H1 (cell line): ENCODE measurements at regions of chr6 and their contacts with region 1.

Region 1: DNA sequence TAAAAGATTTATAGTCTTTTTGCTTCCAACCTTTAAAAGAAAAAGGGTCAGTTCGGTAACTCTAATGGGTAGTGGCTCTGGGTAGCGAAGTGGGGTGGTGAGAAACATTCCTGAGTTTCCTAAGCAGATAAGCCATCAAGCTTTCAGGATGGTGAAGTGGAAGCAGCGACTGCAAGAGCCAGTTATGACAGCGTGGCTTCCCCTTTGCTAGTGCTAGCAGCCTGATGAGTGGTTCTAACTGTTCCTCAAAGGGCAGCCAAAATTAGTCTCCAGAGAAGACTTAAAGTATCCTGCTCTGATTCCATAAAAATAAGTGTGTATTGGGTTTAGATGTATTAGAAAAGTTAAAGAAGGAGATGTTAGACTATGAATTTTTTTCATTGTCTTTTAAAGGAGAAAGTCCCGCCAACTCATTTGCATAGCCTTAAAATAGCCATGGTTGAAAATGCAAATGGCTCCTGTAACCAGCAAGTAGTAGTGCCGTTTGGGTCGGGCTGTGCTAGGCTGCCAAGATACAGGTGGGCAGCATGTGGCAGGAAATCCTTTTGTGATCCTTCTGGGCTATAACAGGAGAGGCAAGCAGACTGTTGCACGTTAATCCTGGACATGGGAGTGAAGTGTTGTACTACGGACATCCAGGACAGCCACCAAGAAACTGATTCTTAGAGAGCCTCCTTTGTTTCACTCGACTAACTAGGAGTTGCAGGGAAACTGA is 18.0 kb downstream of the ELOVL2 start:
- DNase-seq: peak in 1 of 2 experiments; percentile 58
- H3K4me3 ChIP-seq: peak overlapping the region in 2 of 4 experiments; percentile 5 to 48; a peak in 3 of 8 replicates
- H3K27ac ChIP-seq: peak overlapping the region; percentile 19; the same call in 1 of the 2 replicates
- H3K4me1 ChIP-seq: peaks cover 0 to 8% (median 3%) of the 10 kb centered on the region in 4 experiments; a peak in 5 of 7 replicates
- H3K27me3 ChIP-seq: no peaks in the 10 kb centered on the region
- CTCF ChIP-seq: no peak
- EP300 ChIP-seq: no peak
- POLR2A ChIP-seq: peak; percentile 31 to 77
- RAD21 ChIP-seq: no peak

Region 2: DNA sequence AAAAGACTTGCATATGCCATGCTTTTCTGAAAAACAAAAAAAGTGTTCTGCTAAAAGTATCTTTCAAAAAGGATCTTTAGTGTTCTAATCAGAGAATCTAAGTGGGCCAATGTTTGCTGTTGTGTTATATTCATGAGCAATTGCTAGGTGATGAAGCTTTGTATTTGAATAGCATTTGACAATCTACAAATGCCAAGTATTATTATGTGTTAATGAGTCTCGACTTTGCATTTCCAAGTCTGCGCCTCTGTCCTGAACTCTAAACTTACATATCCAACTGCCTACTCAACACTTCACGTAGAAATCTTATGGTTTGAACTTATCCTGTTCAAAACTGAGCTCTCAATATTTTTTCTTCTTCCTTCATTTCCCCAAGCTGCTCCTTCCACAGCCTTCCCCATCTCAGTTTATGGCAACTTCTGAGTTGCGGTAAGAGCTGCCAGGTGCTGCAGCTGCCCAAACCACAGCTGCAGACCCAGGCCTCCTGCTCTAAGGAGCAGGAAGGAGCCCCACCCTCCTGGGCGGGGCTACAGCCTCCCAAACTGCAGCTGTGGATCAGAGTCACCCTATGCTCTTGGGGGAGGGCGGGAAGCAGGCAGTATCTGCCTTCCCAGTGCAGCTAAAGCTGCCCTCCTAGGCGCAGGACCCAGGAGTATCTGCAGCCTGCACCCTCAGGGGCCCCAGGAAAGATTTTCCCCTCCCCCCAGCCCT is 171.0 kb before region 1 on chr6:
- CTCF ChIA-PET with region 1: no interaction called
- POLR2A ChIA-PET with region 1: no interaction called
- DNase-seq: peak in 1 of 2 experiments; percentile 9
- H3K4me3 ChIP-seq: no peak overlapping the region
- H3K27ac ChIP-seq: no peak overlapping the region
- H3K4me1 ChIP-seq: no peaks in the 10 kb centered on the region
- H3K27me3 ChIP-seq: no peaks in the 10 kb centered on the region
- CTCF ChIP-seq: no peak
- EP300 ChIP-seq: no peak
- POLR2A ChIP-seq: no peak
- RAD21 ChIP-seq: no peak

Region 3: DNA sequence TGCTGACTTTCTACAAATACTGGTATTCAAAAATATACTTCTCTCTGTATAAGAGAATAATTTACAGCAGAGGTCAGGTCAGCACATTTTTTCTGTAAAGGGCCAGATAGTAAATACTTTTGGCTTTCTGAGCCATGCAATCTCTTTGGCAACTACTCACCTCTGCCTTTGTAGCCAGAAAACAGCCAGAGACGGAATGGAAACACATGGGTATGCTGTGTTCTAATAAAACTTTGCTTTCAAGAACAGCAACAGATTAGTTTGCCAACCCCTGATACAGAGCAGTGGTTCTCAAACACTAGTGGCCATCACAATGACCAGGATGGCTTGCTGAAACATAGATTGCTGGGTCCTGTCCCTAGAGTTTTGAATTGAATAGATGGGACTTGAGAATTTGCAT is 93.0 kb before region 1 on chr6:
- CTCF ChIA-PET with region 1: no interaction called
- POLR2A ChIA-PET with region 1: no interaction called
- DNase-seq: no peak
- H3K4me3 ChIP-seq: no peak overlapping the region
- H3K27ac ChIP-seq: no peak overlapping the region
- H3K4me1 ChIP-seq: no peaks in the 10 kb centered on the region
- H3K27me3 ChIP-seq: no peaks in the 10 kb centered on the region
- CTCF ChIP-seq: no peak
- EP300 ChIP-seq: no peak
- POLR2A ChIP-seq: no peak
- RAD21 ChIP-seq: no peak

Region 4: GRCh38 chr6:11011787-11012234 is 14.3 kb before region 1 on chr6:
- CTCF ChIA-PET with region 1: interaction called, 25 read pairs
- POLR2A ChIA-PET with region 1: interaction called, 3 read pairs
- DNase-seq: no peak
- H3K4me3 ChIP-seq: no peak overlapping the region
- H3K27ac ChIP-seq: no peak overlapping the region
- H3K4me1 ChIP-seq: peaks cover 0 to 11% (median 0%) of the 10 kb centered on the region in 4 experiments; a peak in 4 of 7 replicates
- H3K27me3 ChIP-seq: no peaks in the 10 kb centered on the region
- CTCF ChIP-seq: peak in 2 of 3 experiments; percentile 17 to 41; a peak in 3 of 4 replicates
- EP300 ChIP-seq: no peak
- POLR2A ChIP-seq: no peak
- RAD21 ChIP-seq: peak in 1 of 2 experiments; percentile 47; a peak in 2 of 4 replicates

Region 5: DNA sequence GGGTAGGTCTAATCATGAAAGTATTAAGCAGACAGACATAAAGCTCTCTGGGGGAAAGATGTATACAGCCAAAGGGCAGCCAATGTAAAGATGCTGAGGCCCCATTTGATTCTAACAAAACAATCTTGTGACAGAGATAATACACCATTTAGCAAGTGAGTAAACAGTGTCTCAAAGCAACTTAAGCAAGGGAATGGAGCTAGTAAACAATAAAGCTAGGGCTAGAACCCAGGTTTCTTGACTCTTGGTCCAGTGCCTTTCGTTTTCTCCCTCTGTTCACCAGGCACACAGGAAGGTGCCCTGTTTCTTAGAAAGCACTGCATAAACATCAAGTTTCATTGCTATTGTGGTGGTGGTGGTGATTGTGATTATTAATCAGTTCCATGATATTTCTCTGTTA is 13.0 kb after region 1 on chr6:
- CTCF ChIA-PET with region 1: interaction called, 24 read pairs
- POLR2A ChIA-PET with region 1: interaction called, 6 read pairs
- DNase-seq: no peak
- H3K4me3 ChIP-seq: no peak overlapping the region
- H3K27ac ChIP-seq: no peak overlapping the region
- H3K4me1 ChIP-seq: peaks cover 0 to 6% (median 2%) of the 10 kb centered on the region in 4 experiments; a peak in 1 of 7 replicates
- H3K27me3 ChIP-seq: peaks cover 18 to 30% (median 27%) of the 10 kb centered on the region in 4 experiments
- CTCF ChIP-seq: no peak
- EP300 ChIP-seq: no peak
- POLR2A ChIP-seq: no peak
- RAD21 ChIP-seq: no peak